ENCODE measurements at regions of chr1 and their contacts with region 1.

Region 1: GRCh38 chr1:54273092-54273794 is 73.3 kb downstream of the MRPL37 start:
- DNase-seq: peak; percentile 94
- H3K4me3 ChIP-seq: peak overlapping the region; percentile 23 to 43 (median 34)
- H3K27ac ChIP-seq: peak overlapping the region; percentile 90 to 97 (median 95)
- H3K4me1 ChIP-seq: peaks cover 77 to 99% (median 95%) of the 10 kb centered on the region in 4 donors
- H3K27me3 ChIP-seq: no peaks in the 10 kb centered on the region
- CTCF ChIP-seq: peak in 2 of 3 experiments; percentile 78
- EP300 ChIP-seq: peak; percentile 56
- POLR2A ChIP-seq: no peak

Region 2: GRCh38 chr1:54324251-54325140 is 51.3 kb after region 1 on chr1:
- intact Hi-C with region 1: loop called (anchors 5 kb)
- DNase-seq: no peak
- H3K4me3 ChIP-seq: no peak overlapping the region
- H3K27ac ChIP-seq: peak overlapping the region; percentile 80 to 85 (median 80)
- H3K4me1 ChIP-seq: peaks cover 70 to 88% (median 79%) of the 10 kb centered on the region in 4 donors
- H3K27me3 ChIP-seq: no peaks in the 10 kb centered on the region
- CTCF ChIP-seq: no peak
- EP300 ChIP-seq: no peak
- POLR2A ChIP-seq: no peak

Region 3: DNA sequence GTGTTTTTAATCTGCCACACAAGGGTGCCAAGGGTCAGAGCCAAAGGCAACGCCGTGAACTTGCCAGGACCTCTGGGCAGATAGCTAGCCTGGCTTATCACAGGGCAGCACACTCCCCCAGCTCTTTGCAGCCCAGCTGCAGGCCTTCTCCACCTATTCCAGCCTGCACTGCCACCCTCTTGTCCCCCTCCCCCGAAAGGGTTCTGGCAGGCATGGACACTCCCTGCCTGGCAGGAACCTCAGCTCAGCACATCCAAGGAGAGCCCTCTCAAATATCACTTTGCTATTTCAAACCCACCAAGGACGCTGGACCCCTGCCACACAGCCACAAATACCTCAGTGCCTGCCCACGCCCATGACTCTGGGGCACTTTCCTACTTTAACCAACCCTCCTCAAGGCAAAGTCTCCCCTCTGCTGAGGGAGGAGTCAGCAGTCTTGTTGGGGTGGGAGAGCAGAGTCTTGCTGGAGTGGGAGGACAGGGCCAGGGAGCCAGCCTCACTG is 123.9 kb after region 1 on chr1:
- intact Hi-C with region 1: no loop called
- DNase-seq: no peak
- H3K4me3 ChIP-seq: no peak overlapping the region
- H3K27ac ChIP-seq: peak overlapping the region; percentile 3 to 61 (median 40)
- H3K4me1 ChIP-seq: peaks cover 34 to 68% (median 58%) of the 10 kb centered on the region in 4 donors
- H3K27me3 ChIP-seq: no peaks in the 10 kb centered on the region
- CTCF ChIP-seq: no peak
- EP300 ChIP-seq: no peak
- POLR2A ChIP-seq: no peak

Measured in esophagus muscularis mucosa (tissue), 4 donors.